B cell (primary cell): ENCODE measurements at regions of chr16 and their contacts with region 1.

Region 1: GRCh38 chr16:89764711-89765201 is 43.4 kb downstream of the ZNF276 start:
- DNase-seq: peak; percentile 89
- ATAC-seq: peak; percentile 88
- H3K4me3 ChIP-seq: peak overlapping the region; percentile 35 to 76 (median 56)
- H3K4me3 Mint-ChIP-seq: peak overlapping the region; percentile 95
- H3K27ac ChIP-seq: peak overlapping the region; percentile 67 to 86
- H3K27ac Mint-ChIP-seq: peak overlapping the region; percentile 97
- H3K4me1 ChIP-seq: peaks cover 37 to 52% of the 10 kb centered on the region in 2 donors
- H3K4me1 Mint-ChIP-seq: peaks cover 51% of the 10 kb centered on the region
- H3K27me3 ChIP-seq: no peaks in the 10 kb centered on the region
- H3K27me3 Mint-ChIP-seq: no peaks in the 10 kb centered on the region
- CTCF ChIP-seq: no peak

Region 2: DNA sequence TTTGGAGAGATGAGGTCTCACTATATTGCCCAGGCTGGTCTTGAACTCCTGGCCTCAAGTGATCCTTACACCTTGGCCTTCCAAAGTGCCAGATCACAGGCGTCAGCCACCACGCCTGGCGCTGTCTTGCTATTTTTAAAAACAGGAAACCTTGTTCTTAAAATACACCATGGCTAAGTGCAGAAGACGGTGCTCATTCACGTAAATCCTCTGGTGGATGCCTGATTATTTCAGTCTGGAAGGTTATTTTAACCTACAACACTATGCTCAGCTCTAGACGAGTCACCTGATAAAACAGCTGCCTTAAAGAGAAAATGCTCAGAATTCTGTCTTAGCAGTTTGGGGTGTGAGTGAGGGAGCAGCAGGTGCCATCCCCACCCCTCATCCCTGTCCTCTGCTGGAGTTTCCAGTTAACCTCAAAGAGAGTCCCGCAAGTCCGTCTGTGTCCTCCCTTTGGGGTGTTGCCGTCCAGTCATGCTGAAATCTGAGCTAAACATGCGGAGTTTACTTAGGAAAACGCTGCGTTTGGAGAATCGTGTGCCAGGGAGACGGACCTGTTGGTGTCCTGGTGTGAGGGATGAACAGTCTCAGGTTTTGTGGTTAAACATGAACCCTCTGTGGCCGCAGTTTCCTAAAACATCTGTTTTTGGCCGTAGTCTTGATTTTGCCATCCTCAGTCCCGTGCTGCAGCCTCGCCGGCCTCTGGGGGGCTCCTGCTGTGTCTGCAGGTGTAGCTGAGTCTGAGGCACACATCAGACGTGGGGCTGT is 239.4 kb before region 1 on chr16:
- CTCF ChIA-PET with region 1: no interaction called
- POLR2A ChIA-PET with region 1: no interaction called
- intact Hi-C with region 1: no loop called
- DNase-seq: peak; percentile 47
- ATAC-seq: peak; percentile 41
- H3K4me3 ChIP-seq: no peak overlapping the region
- H3K4me3 Mint-ChIP-seq: no peak overlapping the region
- H3K27ac ChIP-seq: peak overlapping the region in 1 of 2 donors; percentile 35
- H3K27ac Mint-ChIP-seq: no peak overlapping the region
- H3K4me1 ChIP-seq: peaks cover 16 to 18% of the 10 kb centered on the region in 2 donors
- H3K4me1 Mint-ChIP-seq: peaks cover 19% of the 10 kb centered on the region
- H3K27me3 ChIP-seq: no peaks in the 10 kb centered on the region
- H3K27me3 Mint-ChIP-seq: no peaks in the 10 kb centered on the region
- CTCF ChIP-seq: no peak

Region 3: GRCh38 chr16:89706507-89707263 is 58.1 kb before region 1 on chr16:
- CTCF ChIA-PET with region 1: interaction called, 10 read pairs
- POLR2A ChIA-PET with region 1: no interaction called
- intact Hi-C with region 1: loop called (anchors 10 kb)
- DNase-seq: no peak
- ATAC-seq: no peak
- H3K4me3 ChIP-seq: no peak overlapping the region
- H3K4me3 Mint-ChIP-seq: no peak overlapping the region
- H3K27ac ChIP-seq: no peak overlapping the region
- H3K27ac Mint-ChIP-seq: no peak overlapping the region
- H3K4me1 ChIP-seq: peaks cover 8 to 14% of the 10 kb centered on the region in 2 donors
- H3K4me1 Mint-ChIP-seq: peaks cover 9% of the 10 kb centered on the region
- H3K27me3 ChIP-seq: no peaks in the 10 kb centered on the region
- H3K27me3 Mint-ChIP-seq: no peaks in the 10 kb centered on the region
- CTCF ChIP-seq: no peak

Region 4: GRCh38 chr16:89795676-89796075 is 30.9 kb after region 1 on chr16:
- CTCF ChIA-PET with region 1: interaction called, 14 read pairs
- POLR2A ChIA-PET with region 1: no interaction called
- intact Hi-C with region 1: no loop called
- DNase-seq: no peak
- ATAC-seq: no peak
- H3K4me3 ChIP-seq: no peak overlapping the region
- H3K4me3 Mint-ChIP-seq: no peak overlapping the region
- H3K27ac ChIP-seq: no peak overlapping the region
- H3K27ac Mint-ChIP-seq: no peak overlapping the region
- H3K4me1 ChIP-seq: peaks cover 0 to 4% of the 10 kb centered on the region in 2 donors
- H3K4me1 Mint-ChIP-seq: peaks cover 2% of the 10 kb centered on the region
- H3K27me3 ChIP-seq: no peaks in the 10 kb centered on the region
- H3K27me3 Mint-ChIP-seq: no peaks in the 10 kb centered on the region
- CTCF ChIP-seq: no peak

Region 5: GRCh38 chr16:89917773-89918452 is 153.2 kb after region 1 on chr16:
- CTCF ChIA-PET with region 1: no interaction called
- POLR2A ChIA-PET with region 1: no interaction called
- intact Hi-C with region 1: no loop called
- DNase-seq: peak; percentile 77
- ATAC-seq: peak; percentile 80
- H3K4me3 ChIP-seq: peak overlapping the region; percentile 8 to 59 (median 46)
- H3K4me3 Mint-ChIP-seq: peak overlapping the region; percentile 81
- H3K27ac ChIP-seq: no peak overlapping the region
- H3K27ac Mint-ChIP-seq: peak overlapping the region; percentile 61
- H3K4me1 ChIP-seq: peaks cover 39 to 41% of the 10 kb centered on the region in 2 donors
- H3K4me1 Mint-ChIP-seq: peaks cover 36% of the 10 kb centered on the region
- H3K27me3 ChIP-seq: peaks cover 0 to 45% (median 20%) of the 10 kb centered on the region in 4 experiments
- H3K27me3 Mint-ChIP-seq: peaks cover 24% of the 10 kb centered on the region
- CTCF ChIP-seq: no peak